ENCODE measurements at regions of chr1 and their contacts with region 1.

Region 1: GRCh38 chr1:167043752-167044488 is 46.3 kb downstream of the GPA33 start:
- DNase-seq: peak; percentile 50 to 55
- H3K4me3 ChIP-seq: peak overlapping the region; percentile 47
- H3K27ac ChIP-seq: no peak overlapping the region
- H3K4me1 ChIP-seq: no peaks in the 10 kb centered on the region
- H3K27me3 ChIP-seq: peaks cover 15% of the 10 kb centered on the region
- CTCF ChIP-seq: no peak

Region 2: DNA sequence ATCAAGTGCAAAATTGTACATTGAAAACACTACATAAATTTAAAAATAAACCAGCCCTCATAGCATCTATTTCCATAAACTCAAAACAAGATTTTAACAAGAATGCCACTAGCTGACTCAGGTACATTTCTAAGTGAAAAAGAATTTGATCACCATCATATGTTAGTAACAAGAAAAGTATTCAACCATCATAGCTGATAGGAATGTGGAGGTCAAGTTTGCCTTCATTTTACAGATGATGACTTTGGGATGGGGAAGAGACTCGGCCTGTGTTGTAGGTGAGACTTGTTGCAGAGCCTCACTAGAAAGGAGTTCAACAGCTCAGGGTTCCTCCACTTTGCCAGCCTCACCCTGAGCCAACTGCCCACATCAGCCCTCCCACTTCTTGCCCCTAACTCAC is 558.3 kb before region 1 on chr1:
- CTCF ChIA-PET with region 1: interaction called, 12 read pairs
- POLR2A ChIA-PET with region 1: no interaction called
- intact Hi-C with region 1: no loop called
- DNase-seq: peak in 1 of 2 experiments; percentile 63
- H3K4me3 ChIP-seq: no peak overlapping the region
- H3K27ac ChIP-seq: no peak overlapping the region
- H3K4me1 ChIP-seq: peaks cover 12% of the 10 kb centered on the region
- H3K27me3 ChIP-seq: no peaks in the 10 kb centered on the region
- CTCF ChIP-seq: no peak

Measured in PC-9 (cell line).